ENCODE measurements at regions of chr22 and their contacts with region 1.

Region 1: GRCh38 chr22:44497218-44497904 is 672 bp downstream of the RTL6 start:
- DNase-seq: no peak

Region 2: DNA sequence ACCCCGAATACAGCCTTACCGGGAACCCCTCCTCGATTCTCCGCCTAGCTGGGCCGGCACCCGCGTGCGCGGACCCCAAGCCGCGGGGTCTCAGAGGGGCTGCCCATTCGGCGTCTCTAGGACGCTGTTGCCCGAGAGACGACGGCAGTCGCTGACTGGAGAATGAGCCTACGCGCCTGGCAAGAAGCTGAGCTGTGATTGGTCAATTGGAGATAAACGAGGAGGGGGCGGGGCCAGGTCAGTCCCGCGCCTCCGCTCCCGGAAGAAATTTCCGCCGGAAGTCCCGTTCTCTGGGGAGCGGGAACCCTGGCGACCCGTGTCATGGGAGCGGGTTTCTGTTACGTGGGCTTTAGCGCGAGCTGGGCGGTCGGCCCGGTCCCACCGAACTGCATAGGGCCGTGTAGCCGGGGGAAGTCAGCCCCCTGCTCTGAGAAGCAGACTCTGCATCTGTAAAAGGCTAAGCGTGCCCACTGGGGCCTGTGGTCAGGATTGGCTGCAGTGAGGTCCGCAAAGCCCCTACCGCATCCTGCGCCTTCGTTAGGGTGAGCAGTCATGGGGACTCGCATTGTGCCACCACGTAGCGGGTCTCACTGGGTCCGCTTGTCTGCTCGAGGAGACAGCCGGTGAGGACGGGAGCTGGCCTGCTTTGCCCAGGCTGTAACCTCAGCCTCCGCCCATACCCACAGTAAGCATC is 685.1 kb before region 1 on chr22 and contains the start of gene EFCAB6:
- intact Hi-C with region 1: loop called (anchors 5 kb)
- DNase-seq: peak; percentile 95
- total RNA-seq, gene EFCAB6: 1.3 TPM